Adrenal gland (tissue), 19 donors: ENCODE measurements at regions of chr5 and their contacts with region 1.

Region 1: GRCh38 chr5:82351754-82352145 is 73.6 kb upstream of the RPS23 start:
- DNase-seq: no peak
- H3K4me3 ChIP-seq: no peak overlapping the region
- H3K27ac ChIP-seq: peak overlapping the region in 4 of 5 donors; percentile 14 to 88 (median 44)
- H3K4me1 ChIP-seq: peaks cover 0 to 34% of the 10 kb centered on the region in 2 donors
- H3K27me3 ChIP-seq: no peaks in the 10 kb centered on the region
- CTCF ChIP-seq: peak; percentile 69 to 96 (median 92)
- POLR2A ChIP-seq: no peak

Region 2: DNA sequence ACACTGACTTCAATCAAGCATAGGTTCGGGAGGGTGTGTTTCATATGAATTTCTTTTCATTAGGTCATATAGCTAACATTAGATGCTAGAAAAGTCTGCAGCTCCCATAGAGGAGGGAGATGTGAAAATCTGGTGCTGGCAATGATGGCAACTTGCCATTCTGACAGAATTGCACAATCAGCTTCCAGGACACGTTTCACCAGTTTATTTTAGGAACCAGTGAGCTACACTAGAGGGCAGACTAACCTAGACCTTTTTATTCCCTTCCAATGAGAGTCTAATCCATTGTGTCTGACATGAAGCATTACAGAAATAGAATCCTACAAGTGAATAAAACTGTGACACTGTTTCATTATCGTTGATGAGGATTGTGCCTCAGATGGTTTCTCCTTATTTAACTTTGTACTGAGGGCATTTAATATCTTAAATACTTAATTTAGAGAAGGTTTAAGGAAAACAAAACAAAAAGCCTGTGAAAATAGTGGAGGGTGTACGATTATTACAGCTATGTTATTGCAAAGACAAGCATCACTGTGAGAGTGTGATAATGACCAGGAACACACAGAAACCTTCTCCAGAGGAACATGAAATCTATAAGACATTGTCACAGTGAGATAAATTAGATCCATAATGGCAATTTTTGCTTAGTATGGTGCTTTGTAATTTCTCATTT is 289.7 kb after region 1 on chr5:
- intact Hi-C with region 1: loop called in 1 of 2 experiments (anchors 10 kb)
- DNase-seq: peak; percentile 73 to 94 (median 83)
- H3K4me3 ChIP-seq: no peak overlapping the region
- H3K27ac ChIP-seq: peak overlapping the region in 2 of 5 donors; percentile 25 to 35
- H3K4me1 ChIP-seq: peaks cover 8 to 27% of the 10 kb centered on the region in 2 donors
- H3K27me3 ChIP-seq: no peaks in the 10 kb centered on the region
- CTCF ChIP-seq: peak; percentile 41 to 92 (median 88)
- POLR2A ChIP-seq: no peak

Region 3: GRCh38 chr5:82793808-82794419 is 442.2 kb after region 1 on chr5:
- intact Hi-C with region 1: loop called in 1 of 2 experiments (anchors 10 kb)
- DNase-seq: peak in 6 of 7 donors; percentile 15 to 62 (median 44)
- H3K4me3 ChIP-seq: no peak overlapping the region
- H3K27ac ChIP-seq: no peak overlapping the region
- H3K4me1 ChIP-seq: no peaks in the 10 kb centered on the region
- H3K27me3 ChIP-seq: no peaks in the 10 kb centered on the region
- CTCF ChIP-seq: peak; percentile 32 to 66 (median 63)
- POLR2A ChIP-seq: no peak

Region 4: GRCh38 chr5:83564069-83564749 is 1212.5 kb after region 1 on chr5:
- intact Hi-C with region 1: loop called in 1 of 2 experiments (anchors 10 kb)
- DNase-seq: no peak
- H3K4me3 ChIP-seq: peak overlapping the region in 1 of 4 donors; percentile 14
- H3K27ac ChIP-seq: no peak overlapping the region
- H3K4me1 ChIP-seq: peaks cover 0 to 4% of the 10 kb centered on the region in 2 donors
- H3K27me3 ChIP-seq: no peaks in the 10 kb centered on the region
- CTCF ChIP-seq: peak; percentile 63 to 82 (median 74)
- POLR2A ChIP-seq: no peak